ENCODE measurements at regions of chr12 and their contacts with region 1.

Region 1: DNA sequence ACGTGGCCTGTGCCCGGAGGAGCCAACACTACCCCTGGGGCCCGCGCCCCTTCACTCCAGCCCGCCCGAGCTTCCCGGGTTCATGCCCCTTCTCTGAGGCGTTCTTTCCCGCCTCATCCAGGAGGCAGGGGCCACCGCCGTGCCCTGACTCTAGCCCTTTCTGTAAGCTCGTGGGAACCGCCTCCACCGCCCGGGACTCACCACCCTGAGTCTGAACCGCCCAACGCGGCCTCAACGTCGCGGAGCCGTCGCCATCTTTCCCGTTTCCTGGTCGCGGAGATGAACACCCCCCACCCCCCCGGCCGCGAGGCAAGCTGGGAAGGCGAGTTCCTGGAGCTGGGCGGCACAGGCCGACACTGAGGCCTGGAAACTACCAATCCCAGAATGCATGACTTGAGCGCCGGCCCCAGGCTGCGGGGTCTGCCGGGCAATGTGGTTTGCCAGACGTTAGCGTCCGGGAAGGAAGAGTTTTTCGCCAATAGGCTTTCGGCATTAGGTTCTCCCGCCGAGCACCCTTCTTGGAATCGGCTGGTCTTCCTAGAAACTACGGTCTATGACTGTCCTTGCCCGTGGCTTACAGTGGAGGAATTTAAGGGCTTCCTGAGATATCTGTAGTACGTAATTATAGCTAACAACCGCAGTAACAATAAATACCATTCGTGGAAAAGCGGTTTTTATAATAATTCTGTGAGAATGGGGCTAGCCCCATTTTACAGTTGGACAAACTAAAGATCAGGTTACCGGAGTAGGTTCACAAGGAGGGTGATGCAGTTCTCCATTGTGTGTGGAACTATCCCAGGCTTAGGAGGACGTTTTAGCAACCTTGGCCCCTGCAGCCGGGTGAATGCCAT is at the start of gene DDX23:
- DNase-seq: peak; percentile 92
- ATAC-seq: peak; percentile 99
- H3K4me3 ChIP-seq: peak within 1 kb of the TSS; percentile 96 to 98 (median 98)
- H3K27ac ChIP-seq: peak within 1 kb of the TSS; percentile 75
- H3K4me1 ChIP-seq: peaks cover 18% of the 10 kb centered on the region
- H3K27me3 ChIP-seq: no peaks in the 10 kb centered on the region; a peak in 2 of 5 replicates
- CTCF ChIP-seq: no peak
- EP300 ChIP-seq: peak; percentile 20 to 39; a peak in 2 of 4 replicates
- POLR2A ChIP-seq: peak; percentile 65 to 77
- RAD21 ChIP-seq: 0 out of 2 replicates have a peak, but pooled peaks have one; percentile 9
- total RNA-seq, gene DDX23: 81.5 and 90.0 TPM in 2 replicates

Region 2: DNA sequence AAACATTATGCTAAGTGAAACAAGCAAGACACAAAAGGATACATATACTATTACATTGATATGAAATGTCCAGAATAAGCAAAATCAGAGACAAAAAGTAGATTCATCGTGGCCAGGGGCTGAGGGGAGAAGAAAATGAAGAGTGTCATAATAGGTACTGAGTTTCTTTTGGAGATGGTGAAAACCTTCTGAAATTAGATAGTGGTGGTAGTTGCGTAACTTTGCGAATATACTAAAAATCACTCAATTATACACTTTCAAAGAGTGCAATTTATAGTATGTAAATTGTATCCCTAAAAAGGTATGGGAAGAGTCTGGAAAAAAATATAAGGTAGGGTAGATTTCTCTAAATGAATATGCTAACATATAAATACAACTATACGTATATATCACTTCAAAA is 192.2 kb before region 1 on chr12:
- CTCF ChIA-PET with region 1: no interaction called
- POLR2A ChIA-PET with region 1: no interaction called
- in situ Hi-C with region 1: no loop called
- intact Hi-C with region 1: no loop called
- DNase-seq: no peak
- ATAC-seq: no peak
- H3K4me3 ChIP-seq: no peak overlapping the region
- H3K27ac ChIP-seq: no peak overlapping the region
- H3K4me1 ChIP-seq: no peaks in the 10 kb centered on the region
- H3K27me3 ChIP-seq: no peaks in the 10 kb centered on the region; a peak in 1 of 5 replicates
- CTCF ChIP-seq: no peak
- EP300 ChIP-seq: no peak
- POLR2A ChIP-seq: no peak
- RAD21 ChIP-seq: no peak

Region 3: GRCh38 chr12:48822711-48823110 is 29.4 kb before region 1 on chr12:
- CTCF ChIA-PET with region 1: no interaction called
- POLR2A ChIA-PET with region 1: no interaction called
- in situ Hi-C with region 1: no loop called
- intact Hi-C with region 1: no loop called
- DNase-seq: no peak
- ATAC-seq: no peak
- H3K4me3 ChIP-seq: no peak overlapping the region
- H3K27ac ChIP-seq: no peak overlapping the region
- H3K4me1 ChIP-seq: peaks cover 6% of the 10 kb centered on the region; the same call in 1 of the 2 replicates
- H3K27me3 ChIP-seq: peaks cover 8 to 72% of the 10 kb centered on the region in 2 experiments; a peak in 4 of 5 replicates
- CTCF ChIP-seq: no peak
- EP300 ChIP-seq: no peak
- POLR2A ChIP-seq: no peak
- RAD21 ChIP-seq: no peak

Region 4: GRCh38 chr12:48882315-48882687 is 30.2 kb after region 1 on chr12:
- CTCF ChIA-PET with region 1: interaction called, 16 read pairs
- POLR2A ChIA-PET with region 1: interaction called, 20 read pairs
- in situ Hi-C with region 1: loop called (anchors 5 kb)
- intact Hi-C with region 1: no loop called
- DNase-seq: no peak
- ATAC-seq: no peak
- H3K4me3 ChIP-seq: peak overlapping the region in 1 of 3 experiments; percentile 24; a peak in 2 of 6 replicates
- H3K27ac ChIP-seq: no peak overlapping the region
- H3K4me1 ChIP-seq: peaks cover 95% of the 10 kb centered on the region
- H3K27me3 ChIP-seq: peaks cover 2 to 19% of the 10 kb centered on the region in 2 experiments; a peak in 3 of 5 replicates
- CTCF ChIP-seq: no peak
- EP300 ChIP-seq: no peak
- POLR2A ChIP-seq: no peak
- RAD21 ChIP-seq: no peak

Region 5: DNA sequence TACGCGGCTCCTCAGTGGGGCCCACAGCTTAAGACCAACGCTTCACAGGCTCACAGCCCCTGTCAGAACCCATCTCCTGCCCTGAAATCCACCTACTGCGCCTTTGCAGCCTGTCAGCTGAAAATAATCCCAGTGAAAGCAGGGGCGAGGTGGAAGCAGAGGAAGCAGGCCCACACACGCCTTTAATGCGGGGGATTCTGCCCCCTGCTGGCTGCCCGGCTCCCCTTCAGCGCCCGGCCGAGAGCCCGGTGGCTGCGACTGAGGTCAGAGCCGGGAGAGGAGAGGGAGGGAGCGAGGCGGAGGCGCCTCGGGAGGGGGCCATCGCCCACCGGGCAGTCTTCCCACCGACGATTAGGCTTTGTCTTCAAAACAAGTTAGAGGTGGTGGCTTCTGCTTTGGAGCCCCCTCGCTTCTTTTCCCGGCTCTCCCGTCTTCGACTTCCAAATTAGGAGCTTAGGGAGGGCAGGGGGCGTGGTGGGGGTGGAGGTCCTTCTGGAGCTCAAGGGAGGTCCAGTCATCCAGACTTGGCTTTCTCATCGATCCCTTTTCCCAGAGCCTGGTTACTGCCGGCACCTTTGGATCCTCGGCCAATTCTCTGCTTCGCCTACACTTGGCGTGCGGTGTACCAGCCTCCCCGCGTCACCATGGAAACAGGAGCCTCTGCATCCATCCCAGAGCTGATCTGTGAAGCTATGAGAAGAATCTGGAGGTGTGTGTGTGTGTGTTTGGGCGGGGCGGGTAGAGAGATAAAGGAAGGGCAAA is 38.7 kb after region 1 on chr12:
- CTCF ChIA-PET with region 1: interaction called, 64 read pairs
- POLR2A ChIA-PET with region 1: interaction called, 26 read pairs
- in situ Hi-C with region 1: loop called (anchors 5 kb)
- intact Hi-C with region 1: loop called (anchors 1 kb)
- DNase-seq: peak; percentile 48
- ATAC-seq: peak; percentile 97
- H3K4me3 ChIP-seq: peak overlapping the region in 1 of 3 experiments; percentile 34; a peak in 1 of 6 replicates
- H3K27ac ChIP-seq: no peak overlapping the region
- H3K4me1 ChIP-seq: peaks cover 33% of the 10 kb centered on the region
- H3K27me3 ChIP-seq: peaks cover 1 to 10% of the 10 kb centered on the region in 2 experiments; a peak in 3 of 5 replicates
- CTCF ChIP-seq: peak; percentile 97
- EP300 ChIP-seq: no peak
- POLR2A ChIP-seq: no peak
- RAD21 ChIP-seq: peak; percentile 96

Region 6: DNA sequence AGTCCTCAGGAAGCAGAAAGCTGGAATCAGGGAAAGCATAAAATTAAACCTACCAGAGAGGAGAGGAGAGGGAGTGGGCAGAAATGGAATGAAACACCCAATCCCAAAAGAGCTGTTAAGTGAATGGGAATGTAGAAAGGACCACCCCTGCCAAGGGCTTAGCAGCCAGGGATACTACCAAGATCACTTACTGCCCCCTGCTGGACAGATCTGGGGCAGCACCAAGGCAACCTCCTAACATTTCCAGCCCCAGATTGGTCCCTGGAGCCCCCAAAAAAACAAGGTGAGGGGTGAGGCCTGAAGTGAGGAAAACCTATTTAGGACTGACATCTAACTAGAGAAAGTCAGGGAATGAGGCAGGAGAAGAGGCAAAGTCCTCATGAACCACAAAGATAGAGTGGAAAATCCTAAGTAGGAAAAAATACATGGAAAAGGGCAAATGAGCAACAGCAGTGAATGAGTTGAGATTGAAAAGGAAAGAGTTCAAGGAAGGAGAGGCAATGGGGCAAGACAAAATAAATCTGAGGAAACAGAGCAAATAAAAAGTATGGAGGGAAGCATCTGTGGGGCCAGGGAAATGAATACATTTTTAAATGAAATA is 84.4 kb after region 1 on chr12:
- CTCF ChIA-PET with region 1: interaction called, 27 read pairs
- POLR2A ChIA-PET with region 1: interaction called, 9 read pairs
- in situ Hi-C with region 1: loop called (anchors 5 kb)
- intact Hi-C with region 1: loop called (anchors 1 kb)
- DNase-seq: peak; percentile 43
- ATAC-seq: peak; percentile 86
- H3K4me3 ChIP-seq: no peak overlapping the region
- H3K27ac ChIP-seq: no peak overlapping the region
- H3K4me1 ChIP-seq: peaks cover 7% of the 10 kb centered on the region
- H3K27me3 ChIP-seq: no peaks in the 10 kb centered on the region
- CTCF ChIP-seq: peak; percentile 89
- EP300 ChIP-seq: no peak
- POLR2A ChIP-seq: no peak
- RAD21 ChIP-seq: peak; percentile 67; the same call in 1 of the 2 replicates

Measured in HepG2 (cell line).